ENCODE measurements at regions of chr17 and their contacts with region 1.

Region 1: DNA sequence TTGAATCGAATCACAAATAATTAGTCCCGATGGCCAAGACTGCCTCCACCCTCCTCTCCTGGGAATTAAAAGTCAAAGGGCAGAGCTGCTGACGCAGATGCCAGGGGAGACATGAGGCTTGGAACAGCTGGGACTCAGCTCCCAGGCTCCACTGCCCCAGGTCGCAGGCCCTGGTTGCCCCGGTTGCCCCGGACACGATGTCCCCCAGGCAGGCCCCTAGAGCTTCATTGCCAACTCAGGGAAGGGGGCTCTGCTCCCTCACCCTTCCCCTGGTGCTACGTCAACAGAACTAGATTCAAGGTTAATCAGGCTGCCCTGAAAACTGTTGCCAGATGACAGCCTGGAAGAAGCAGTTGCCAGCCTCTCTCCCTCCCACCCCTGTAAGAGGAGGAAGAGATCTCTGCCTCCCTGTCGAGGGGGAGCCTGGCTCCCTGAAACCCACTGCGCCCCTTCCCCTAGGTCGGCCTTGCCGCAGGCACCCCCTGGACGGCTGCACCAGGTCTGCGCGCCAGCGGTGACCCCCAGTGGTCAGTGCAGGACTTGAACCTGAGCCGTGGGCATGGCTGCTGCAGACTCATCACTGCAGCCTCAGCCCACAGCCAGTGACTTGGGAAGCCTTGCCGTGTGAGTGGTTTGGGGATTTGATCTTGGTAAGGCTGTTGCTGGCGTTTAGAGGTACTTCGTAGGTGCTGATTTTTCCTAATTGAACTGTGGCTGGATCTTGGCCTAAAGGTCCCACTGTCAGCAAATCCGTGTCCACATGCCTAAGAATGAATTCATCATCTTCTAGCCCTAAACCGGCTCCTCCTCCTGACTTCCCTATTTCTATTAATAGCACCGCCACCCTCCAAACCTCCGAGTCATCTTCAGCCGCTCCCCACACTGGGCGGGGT is 84.1 kb upstream of the TOB1 start:
- DNase-seq: peak; percentile 63 to 93
- H3K4me3 ChIP-seq: peak overlapping the region in 1 of 2 donors; percentile 22
- H3K27ac ChIP-seq: peak overlapping the region; percentile 82 to 84
- H3K4me1 ChIP-seq: peaks cover 22 to 33% of the 10 kb centered on the region in 2 donors
- H3K27me3 ChIP-seq: no peaks in the 10 kb centered on the region
- CTCF ChIP-seq: peak; percentile 79 to 84 (median 83)

Region 2: GRCh38 chr17:50547035-50547735 is 403.1 kb before region 1 on chr17 and contains the start of gene SPATA20:
- intact Hi-C with region 1: loop called (anchors 5 kb)
- DNase-seq: peak; percentile 72 to 97
- H3K4me3 ChIP-seq: peak within 1 kb of the TSS; percentile 69 to 76
- H3K27ac ChIP-seq: peak within 1 kb of the TSS; percentile 65 to 80
- H3K4me1 ChIP-seq: peaks cover 3 to 16% of the 10 kb centered on the region in 2 donors
- H3K27me3 ChIP-seq: no peaks in the 10 kb centered on the region
- CTCF ChIP-seq: peak; percentile 99
- total RNA-seq, gene SPATA20: 463 TPM

Region 3: GRCh38 chr17:50853015-50853615 is 97.1 kb before region 1 on chr17:
- intact Hi-C with region 1: loop called (anchors 1 kb)
- DNase-seq: no peak
- H3K4me3 ChIP-seq: peak overlapping the region in 1 of 2 donors; percentile 60
- H3K27ac ChIP-seq: peak overlapping the region; percentile 79 to 83
- H3K4me1 ChIP-seq: no peaks in the 10 kb centered on the region
- H3K27me3 ChIP-seq: no peaks in the 10 kb centered on the region
- CTCF ChIP-seq: no peak

Region 4: GRCh38 chr17:50865984-50866774 is 84.1 kb before region 1 on chr17 and contains the start of gene TOB1:
- intact Hi-C with region 1: loop called (anchors 1 kb)
- DNase-seq: peak; percentile 92 to 99
- H3K4me3 ChIP-seq: peak within 1 kb of the TSS; percentile 98 to 99
- H3K27ac ChIP-seq: peak within 1 kb of the TSS; percentile 99 to 100
- H3K4me1 ChIP-seq: peaks cover 0 to 22% of the 10 kb centered on the region in 2 donors
- H3K27me3 ChIP-seq: no peaks in the 10 kb centered on the region
- CTCF ChIP-seq: no peak
- total RNA-seq, gene TOB1: 41.7 TPM

Region 5: GRCh38 chr17:50904521-50905459 is 45.4 kb before region 1 on chr17:
- intact Hi-C with region 1: loop called (anchors 2 kb)
- DNase-seq: peak in 1 of 2 donors; percentile 82
- H3K4me3 ChIP-seq: no peak overlapping the region
- H3K27ac ChIP-seq: peak overlapping the region; percentile 95 to 99
- H3K4me1 ChIP-seq: peaks cover 13 to 26% of the 10 kb centered on the region in 2 donors
- H3K27me3 ChIP-seq: no peaks in the 10 kb centered on the region
- CTCF ChIP-seq: no peak

Region 6: DNA sequence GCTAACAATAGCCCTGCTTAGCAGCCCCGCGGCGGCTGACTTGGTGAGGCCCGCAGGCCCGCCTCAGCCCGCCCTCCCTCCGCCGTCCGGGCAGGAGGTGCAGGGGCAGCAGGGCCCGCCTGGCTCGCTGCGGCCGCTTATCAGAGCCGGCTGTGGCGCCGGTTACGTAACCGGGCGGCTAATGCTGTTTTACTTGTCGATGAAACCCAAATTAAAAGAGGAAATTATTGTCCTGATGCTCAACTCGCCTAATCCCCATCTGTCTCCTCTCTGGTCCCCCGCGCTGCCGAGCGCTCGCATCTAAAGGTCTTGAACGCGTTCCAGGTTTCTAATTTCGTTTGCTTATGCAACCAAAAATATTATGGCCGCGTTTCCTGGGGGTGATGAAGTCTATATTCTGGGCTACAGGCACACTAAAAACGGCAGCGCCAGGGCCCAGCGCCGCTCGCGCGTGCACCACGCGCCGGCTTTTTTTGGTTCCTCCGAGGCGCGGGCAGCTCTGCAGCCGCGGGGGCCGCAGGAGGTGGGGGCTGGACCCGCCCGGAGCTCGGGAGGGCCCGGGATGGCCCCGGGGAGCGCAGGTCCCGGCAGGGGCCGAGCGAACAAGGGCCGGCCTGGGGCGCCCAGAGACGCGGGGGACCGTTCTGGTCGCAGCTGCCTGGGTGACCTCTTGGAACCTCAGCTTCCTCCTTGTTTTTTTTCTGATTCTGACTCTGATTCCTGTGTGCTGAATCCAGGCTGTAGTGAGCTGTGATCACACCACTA is 18.9 kb before region 1 on chr17:
- intact Hi-C with region 1: loop called (anchors 1 kb)
- DNase-seq: peak; percentile 79 to 96
- H3K4me3 ChIP-seq: peak overlapping the region; percentile 47 to 63
- H3K27ac ChIP-seq: peak overlapping the region; percentile 96 to 98
- H3K4me1 ChIP-seq: peaks cover 18 to 38% of the 10 kb centered on the region in 2 donors
- H3K27me3 ChIP-seq: no peaks in the 10 kb centered on the region
- CTCF ChIP-seq: no peak

Measured in ascending aorta (tissue), 2 donors.